Dorsolateral prefrontal cortex (tissue), 120 donors: ENCODE measurements at regions of chr2 and their contacts with region 1.

Region 1: DNA sequence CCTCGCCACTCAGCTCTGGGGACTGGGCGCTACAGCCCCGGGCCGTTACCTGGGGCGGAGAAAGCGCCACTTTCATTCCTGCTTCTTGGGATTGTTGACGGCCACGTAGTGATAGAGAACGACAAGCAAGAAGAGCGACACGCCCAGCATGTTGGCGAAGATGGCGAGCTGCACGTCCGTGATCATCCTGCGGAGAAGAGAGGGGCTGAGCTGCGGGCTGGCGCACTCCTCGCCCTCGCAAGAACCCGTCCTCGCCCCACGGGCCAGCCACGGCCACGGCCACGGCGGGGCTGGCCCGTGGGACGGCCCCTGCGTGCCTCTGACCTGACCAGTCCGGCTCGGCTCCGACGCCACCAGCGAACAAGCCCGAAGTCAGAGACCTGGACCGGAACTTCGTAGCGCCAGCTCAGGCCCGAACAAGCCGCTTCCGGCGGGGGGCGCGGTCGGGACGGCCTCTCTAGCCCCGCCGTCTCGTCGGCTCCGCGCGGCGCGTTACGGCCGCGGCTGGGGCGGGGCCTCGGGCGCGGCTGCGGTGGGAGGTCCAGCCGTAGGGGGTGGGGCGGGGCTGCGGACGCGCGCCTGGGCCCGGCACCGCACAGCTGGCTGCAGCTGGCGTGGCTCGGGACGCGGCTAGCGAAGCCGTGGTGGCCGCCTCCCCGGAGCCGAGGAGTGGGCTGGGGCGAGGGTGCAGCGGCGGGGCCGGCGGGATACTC is at the start of gene OST4:
- DNase-seq: peak; percentile 91 to 98 (median 95)
- H3K4me3 ChIP-seq: peak within 1 kb of the TSS; percentile 64 to 99 (median 91)
- H3K27ac ChIP-seq: peak within 1 kb of the TSS; percentile 66 to 96 (median 89)
- H3K27me3 ChIP-seq: no peaks in the 10 kb centered on the region
- CTCF ChIP-seq: peak in 42 of 56 donors; percentile 15 to 74 (median 43)
- total RNA-seq, gene OST4: 62.3 to 158 (median 110) TPM

Region 2: GRCh38 chr2:26314243-26314642 is 757.2 kb before region 1 on chr2:
- intact Hi-C with region 1: no loop called
- DNase-seq: no peak
- H3K4me3 ChIP-seq: no peak overlapping the region
- H3K27ac ChIP-seq: no peak overlapping the region
- H3K27me3 ChIP-seq: peaks cover 0 to 6% (median 0%) of the 10 kb centered on the region in 45 donors
- CTCF ChIP-seq: no peak

Region 3: GRCh38 chr2:26970244-26970920 is 101.1 kb before region 1 on chr2 and contains the start of gene MAPRE3:
- intact Hi-C with region 1: loop called in 1 of 2 experiments (anchors 5 kb)
- DNase-seq: peak; percentile 80 to 94 (median 90)
- H3K4me3 ChIP-seq: peak within 1 kb of the TSS; percentile 61 to 96 (median 84)
- H3K27ac ChIP-seq: peak within 1 kb of the TSS in 55 of 59 donors; percentile 24 to 91 (median 76)
- H3K27me3 ChIP-seq: no peaks in the 10 kb centered on the region
- CTCF ChIP-seq: peak in 11 of 56 donors; percentile 5 to 34 (median 19)
- total RNA-seq, gene MAPRE3: 97.4 to 247 (median 192) TPM

Region 4: DNA sequence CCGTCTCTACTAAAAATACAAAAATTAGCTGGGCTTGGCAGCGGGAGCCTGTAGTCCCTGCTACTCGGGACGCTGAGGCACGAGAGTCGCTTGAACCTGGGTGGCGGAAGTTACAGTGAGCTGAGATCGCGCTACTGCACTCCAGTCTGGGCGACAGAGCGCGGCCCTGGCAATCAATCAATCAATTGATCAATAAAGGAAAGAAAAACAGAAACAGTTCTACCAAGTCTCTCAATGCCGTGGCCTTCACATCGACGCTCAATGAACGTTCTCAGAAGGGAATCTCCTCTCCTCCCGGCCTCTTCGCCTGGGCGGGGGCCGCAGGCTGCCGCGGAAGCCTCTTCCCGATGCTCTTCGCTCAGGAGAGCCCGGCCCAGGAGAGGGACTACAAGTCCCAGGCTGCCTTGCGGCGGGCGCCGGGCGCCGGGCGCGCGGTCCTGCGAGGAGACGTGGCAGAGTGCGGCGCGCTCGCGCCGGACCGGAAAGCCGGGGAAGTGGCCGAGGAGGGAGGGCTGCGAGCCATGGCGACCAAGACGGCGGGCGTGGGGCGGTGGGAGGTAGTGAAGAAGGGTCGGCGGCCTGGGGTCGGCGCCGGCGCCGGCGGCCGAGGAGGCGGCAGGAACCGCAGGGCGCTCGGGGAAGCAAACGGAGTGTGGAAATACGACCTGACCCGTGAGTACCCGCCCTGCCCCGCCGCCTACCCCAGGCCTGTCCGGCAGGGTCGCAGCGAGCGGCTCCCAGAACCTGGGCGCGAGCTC is 38.8 kb before region 1 on chr2 and contains the start of gene TMEM214:
- intact Hi-C with region 1: loop called in 1 of 2 experiments (anchors 2 kb)
- DNase-seq: peak; percentile 79 to 94 (median 88)
- H3K4me3 ChIP-seq: peak within 1 kb of the TSS; percentile 64 to 99 (median 92)
- H3K27ac ChIP-seq: peak within 1 kb of the TSS in 54 of 59 donors; percentile 25 to 92 (median 71)
- H3K27me3 ChIP-seq: no peaks in the 10 kb centered on the region
- CTCF ChIP-seq: peak in 24 of 56 donors; percentile 5 to 47 (median 28)
- total RNA-seq, gene TMEM214: 30.6 to 65.3 (median 43.5) TPM

Region 5: GRCh38 chr2:27050281-27050995 is 21.0 kb before region 1 on chr2:
- intact Hi-C with region 1: loop called (anchors 1 to 2 kb)
- DNase-seq: peak; percentile 88 to 97 (median 94)
- H3K4me3 ChIP-seq: peak overlapping the region; percentile 68 to 98 (median 91)
- H3K27ac ChIP-seq: peak overlapping the region; percentile 73 to 100 (median 97)
- H3K27me3 ChIP-seq: no peaks in the 10 kb centered on the region
- CTCF ChIP-seq: peak in 36 of 56 donors; percentile 6 to 57 (median 34)

Region 6: GRCh38 chr2:27133905-27134780 is 62.7 kb after region 1 on chr2 and contains the start of gene PREB:
- intact Hi-C with region 1: loop called in 1 of 2 experiments (anchors 2 kb)
- DNase-seq: peak; percentile 88 to 99 (median 96)
- H3K4me3 ChIP-seq: peak within 1 kb of the TSS; percentile 45 to 100 (median 96)
- H3K27ac ChIP-seq: peak within 1 kb of the TSS in 57 of 59 donors; percentile 36 to 95 (median 87)
- H3K27me3 ChIP-seq: no peaks in the 10 kb centered on the region
- CTCF ChIP-seq: peak in 32 of 56 donors; percentile 3 to 55 (median 30)
- total RNA-seq, gene PREB: 25.2 to 52.0 (median 34.9) TPM

Region 7: GRCh38 chr2:27303093-27304025 is 231.9 kb after region 1 on chr2:
- intact Hi-C with region 1: no loop called
- DNase-seq: peak in 4 of 10 donors; percentile 21 to 54 (median 35)
- H3K4me3 ChIP-seq: peak overlapping the region in 49 of 59 donors; percentile 12 to 58 (median 39)
- H3K27ac ChIP-seq: peak overlapping the region in 2 of 59 donors; percentile 31 to 55
- H3K27me3 ChIP-seq: peaks cover 0 to 28% (median 3%) of the 10 kb centered on the region in 45 donors
- CTCF ChIP-seq: peak; percentile 78 to 95 (median 88)